ENCODE measurements at regions of chr22 and their contacts with region 1.

Region 1: GRCh38 chr22:31943976-31944699 is at the start of gene YWHAH:
- DNase-seq: peak; percentile 71
- ATAC-seq: peak; percentile 81
- H3K4me3 ChIP-seq: peak within 1 kb of the TSS; percentile 78 to 87
- H3K27ac ChIP-seq: peak within 1 kb of the TSS; percentile 98
- H3K4me1 ChIP-seq: peaks cover 22 to 31% of the 10 kb centered on the region in 2 experiments
- H3K27me3 ChIP-seq: no peaks in the 10 kb centered on the region
- CTCF ChIP-seq: no peak
- POLR2A ChIP-seq: peak; percentile 97
- RAD21 ChIP-seq: no peak
- total RNA-seq, gene YWHAH: 140 TPM

Region 2: GRCh38 chr22:31652911-31653684 is 291.0 kb before region 1 on chr22:
- CTCF ChIA-PET with region 1: no interaction called
- POLR2A ChIA-PET with region 1: no interaction called
- RAD21 ChIA-PET with region 1: no interaction called
- intact Hi-C with region 1: no loop called
- DNase-seq: no peak
- ATAC-seq: no peak
- H3K4me3 ChIP-seq: no peak overlapping the region
- H3K27ac ChIP-seq: no peak overlapping the region
- H3K4me1 ChIP-seq: peaks cover 6 to 58% of the 10 kb centered on the region in 2 experiments
- H3K27me3 ChIP-seq: no peaks in the 10 kb centered on the region
- CTCF ChIP-seq: no peak
- POLR2A ChIP-seq: no peak
- RAD21 ChIP-seq: no peak

Region 3: DNA sequence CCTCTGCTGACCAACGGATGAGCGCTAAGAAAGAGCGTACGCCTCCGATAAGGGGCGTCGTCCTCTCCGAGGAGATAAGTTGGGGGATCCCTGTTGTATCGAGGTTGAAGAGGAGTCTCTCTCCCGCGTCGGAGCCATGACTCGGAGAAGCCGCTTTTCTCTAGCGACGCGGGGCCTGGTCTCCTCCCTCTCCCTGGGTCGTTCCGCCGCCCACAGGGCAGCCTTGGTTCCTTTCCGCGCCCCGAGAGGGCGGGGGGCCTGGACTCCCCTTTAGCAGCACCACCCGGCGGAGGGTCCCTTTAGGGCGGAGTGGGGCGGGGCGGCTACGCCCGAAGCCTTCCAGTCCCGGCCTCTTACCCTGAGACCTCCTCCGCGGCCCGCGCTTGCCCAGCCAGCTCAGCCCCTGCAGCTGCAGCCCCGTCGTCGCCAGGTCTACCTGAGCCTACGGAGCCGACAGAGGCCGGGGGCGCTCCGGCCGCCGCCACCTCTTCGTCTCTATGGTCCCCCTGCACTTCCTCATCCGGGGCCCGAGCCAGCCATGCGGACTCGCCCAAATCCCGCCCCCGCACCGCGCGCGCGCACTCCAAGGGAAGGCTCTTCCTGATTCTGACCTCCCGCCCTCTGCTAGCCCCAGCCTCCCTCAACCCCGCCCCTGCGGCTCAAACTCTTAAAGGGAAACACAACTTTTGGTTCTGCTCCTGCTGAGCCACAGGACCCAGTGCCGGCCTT is 194.3 kb before region 1 on chr22 and contains the start of gene PRR14L:
- CTCF ChIA-PET with region 1: no interaction called
- POLR2A ChIA-PET with region 1: no interaction called
- RAD21 ChIA-PET with region 1: no interaction called
- intact Hi-C with region 1: loop called (anchors 5 kb)
- DNase-seq: peak; percentile 91
- ATAC-seq: peak; percentile 67
- H3K4me3 ChIP-seq: peak within 1 kb of the TSS; percentile 70 to 98
- H3K27ac ChIP-seq: peak within 1 kb of the TSS; percentile 95
- H3K4me1 ChIP-seq: peaks cover 27 to 51% of the 10 kb centered on the region in 2 experiments; a peak in 3 of 4 replicates
- H3K27me3 ChIP-seq: no peaks in the 10 kb centered on the region
- CTCF ChIP-seq: 0 out of 6 replicates have a peak, but pooled peaks of 1 of the 3 experiments have one; percentile 2
- POLR2A ChIP-seq: peak; percentile 37
- RAD21 ChIP-seq: no peak; the same call in 1 of the 2 replicates
- total RNA-seq, gene PRR14L: 61.5 TPM

Region 4: GRCh38 chr22:31829505-31829904 is 114.6 kb before region 1 on chr22:
- CTCF ChIA-PET with region 1: no interaction called
- POLR2A ChIA-PET with region 1: no interaction called
- RAD21 ChIA-PET with region 1: no interaction called
- intact Hi-C with region 1: loop called (anchors 10 kb)
- DNase-seq: peak; percentile 89
- ATAC-seq: peak; percentile 94
- H3K4me3 ChIP-seq: peak overlapping the region in 1 of 2 experiments; percentile 38; a peak in 2 of 4 replicates
- H3K27ac ChIP-seq: peak overlapping the region; percentile 68
- H3K4me1 ChIP-seq: peaks cover 27 to 28% of the 10 kb centered on the region in 2 experiments
- H3K27me3 ChIP-seq: no peaks in the 10 kb centered on the region
- CTCF ChIP-seq: no peak
- POLR2A ChIP-seq: no peak
- RAD21 ChIP-seq: peak; percentile 23

Region 5: GRCh38 chr22:32341122-32341740 is 397.1 kb after region 1 on chr22:
- CTCF ChIA-PET with region 1: no interaction called
- POLR2A ChIA-PET with region 1: no interaction called
- RAD21 ChIA-PET with region 1: no interaction called
- intact Hi-C with region 1: no loop called
- DNase-seq: no peak
- ATAC-seq: no peak
- H3K4me3 ChIP-seq: no peak overlapping the region
- H3K27ac ChIP-seq: no peak overlapping the region
- H3K4me1 ChIP-seq: no peaks in the 10 kb centered on the region; a peak in 1 of 4 replicates
- H3K27me3 ChIP-seq: no peaks in the 10 kb centered on the region
- CTCF ChIP-seq: no peak
- POLR2A ChIP-seq: no peak
- RAD21 ChIP-seq: no peak